Mucosa of descending colon (tissue), 3 donors: ENCODE measurements at regions of chr4 and their contacts with region 1.

Region 1: GRCh38 chr4:140153718-140154571 is at the start of gene MAML3:
- DNase-seq: peak; percentile 96 to 97 (median 96)
- ATAC-seq: peak; percentile 72
- H3K4me3 ChIP-seq: peak within 1 kb of the TSS; percentile 67
- H3K4me1 ChIP-seq: peaks cover 13% of the 10 kb centered on the region
- CTCF ChIP-seq: no peak
- total RNA-seq, gene MAML3: 10.4 to 23.5 (median 14.8) TPM

Region 2: GRCh38 chr4:140012688-140013486 is 141.1 kb before region 1 on chr4:
- intact Hi-C with region 1: loop called in 1 of 2 experiments (anchors 10 kb)
- DNase-seq: peak in 2 of 3 donors; percentile 67 to 90
- ATAC-seq: peak; percentile 99
- H3K4me3 ChIP-seq: no peak overlapping the region
- H3K4me1 ChIP-seq: no peaks in the 10 kb centered on the region
- CTCF ChIP-seq: peak; percentile 24

Region 3: DNA sequence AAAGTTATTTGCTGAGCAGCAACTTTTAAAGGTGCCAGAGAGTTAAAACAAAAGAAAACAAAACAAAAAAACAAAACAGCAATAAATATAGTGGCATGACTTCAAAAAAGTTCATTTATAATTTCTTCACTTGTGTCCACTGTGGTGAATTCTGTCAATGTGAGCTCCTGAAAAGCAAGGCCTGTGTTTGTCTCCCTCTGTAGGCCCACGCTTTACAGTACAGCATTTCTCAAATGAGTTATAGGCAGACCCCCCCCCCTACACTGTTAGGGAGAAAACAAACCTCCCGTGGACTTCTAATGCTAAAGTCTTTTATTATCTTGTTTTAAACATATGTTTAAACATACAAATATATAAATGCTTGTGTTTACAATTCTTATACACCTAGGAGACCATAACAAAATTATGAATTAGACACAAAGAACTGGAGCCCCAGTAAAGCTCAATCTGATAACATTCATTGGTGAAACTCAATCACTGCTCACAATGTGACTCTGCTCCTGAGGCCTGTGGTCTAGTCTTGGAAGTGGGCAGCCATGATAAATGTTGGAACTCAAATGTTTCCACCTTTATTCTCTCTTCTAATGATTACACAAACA is 172.5 kb after region 1 on chr4:
- intact Hi-C with region 1: no loop called
- DNase-seq: peak in 1 of 3 donors; percentile 54
- ATAC-seq: peak; percentile 69
- H3K4me3 ChIP-seq: no peak overlapping the region
- H3K4me1 ChIP-seq: no peaks in the 10 kb centered on the region
- CTCF ChIP-seq: peak; percentile 28